ENCODE measurements at regions of chr1 and their contacts with region 1.

Region 1: DNA sequence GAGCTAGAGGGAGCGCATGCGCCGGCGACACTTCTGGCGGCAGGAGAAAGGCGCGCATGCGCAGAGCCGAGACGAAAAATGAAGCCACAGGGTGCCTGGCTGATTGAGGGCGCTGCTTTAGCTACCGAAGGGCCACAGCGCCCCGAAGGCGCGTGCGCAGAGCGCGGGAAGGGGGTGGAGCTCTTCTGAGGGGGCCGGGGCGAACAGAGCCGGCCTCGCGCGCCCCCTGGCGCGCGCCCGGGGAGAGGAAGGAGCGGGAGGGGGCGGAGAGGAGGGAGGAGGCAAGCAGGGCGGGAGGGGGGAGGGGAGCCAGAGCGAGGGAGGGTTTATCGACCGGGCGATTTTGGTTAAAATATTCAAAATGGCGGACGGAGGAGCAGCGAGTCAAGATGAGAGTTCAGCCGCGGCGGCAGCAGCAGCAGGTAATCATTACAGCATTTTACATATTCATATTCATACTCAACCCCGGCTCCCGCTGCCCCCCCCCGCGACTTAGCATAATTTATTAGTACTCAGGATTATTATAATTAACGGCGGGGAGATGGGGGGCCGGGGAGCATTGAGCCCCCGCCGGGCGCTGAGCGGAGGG is at the start of gene POU2F1:
- DNase-seq: peak; percentile 98 to 100 (median 99)
- H3K4me3 ChIP-seq: peak within 1 kb of the TSS; percentile 91 to 99 (median 91)
- H3K4me3 Mint-ChIP-seq: peak within 1 kb of the TSS; percentile 90 to 99
- H3K27ac ChIP-seq: peak within 1 kb of the TSS; percentile 86 to 97
- H3K27ac Mint-ChIP-seq: peak within 1 kb of the TSS; percentile 89 to 97 (median 92)
- H3K4me1 ChIP-seq: peaks cover 11 to 18% of the 10 kb centered on the region in 2 donors
- H3K4me1 Mint-ChIP-seq: peaks cover 35% of the 10 kb centered on the region
- H3K27me3 ChIP-seq: no peaks in the 10 kb centered on the region
- H3K27me3 Mint-ChIP-seq: no peaks in the 10 kb centered on the region
- CTCF ChIP-seq: peak; percentile 35
- polyA plus RNA-seq, gene POU2F1: 2.3 to 4.2 (median 3.9) TPM

Region 2: DNA sequence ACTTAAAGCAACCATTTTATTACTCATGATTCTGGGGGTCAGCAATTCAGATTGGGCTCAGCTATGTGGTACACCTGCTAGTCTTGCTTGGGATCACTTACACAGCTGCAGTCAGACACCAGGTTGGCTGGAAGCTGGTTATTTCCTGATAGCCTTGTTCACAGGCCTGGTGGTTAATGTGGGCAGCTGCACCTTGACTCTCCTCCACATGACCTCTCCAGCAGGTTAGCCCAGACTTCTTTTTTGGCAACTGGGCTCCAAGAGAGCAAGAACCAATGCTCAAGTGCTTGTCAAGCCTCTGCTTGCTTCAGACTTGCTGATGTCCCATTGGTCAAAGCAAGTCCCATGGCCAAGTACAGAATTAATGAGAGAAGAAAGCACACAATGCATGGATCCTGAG is 393.2 kb before region 1 on chr1:
- intact Hi-C with region 1: no loop called
- DNase-seq: no peak
- H3K4me3 ChIP-seq: no peak overlapping the region
- H3K4me3 Mint-ChIP-seq: no peak overlapping the region
- H3K27ac ChIP-seq: no peak overlapping the region
- H3K27ac Mint-ChIP-seq: no peak overlapping the region
- H3K4me1 ChIP-seq: no peaks in the 10 kb centered on the region
- H3K4me1 Mint-ChIP-seq: no peaks in the 10 kb centered on the region
- H3K27me3 ChIP-seq: peaks cover 0 to 2% of the 10 kb centered on the region in 2 donors
- H3K27me3 Mint-ChIP-seq: peaks cover 0 to 2% (median 0%) of the 10 kb centered on the region in 3 donors
- CTCF ChIP-seq: no peak

Region 3: GRCh38 chr1:166884040-166884642 is 336.5 kb before region 1 on chr1:
- intact Hi-C with region 1: loop called in 1 of 2 experiments (anchors 10 kb)
- DNase-seq: peak; percentile 27 to 49 (median 40)
- H3K4me3 ChIP-seq: peak overlapping the region in 1 of 3 experiments; percentile 13
- H3K4me3 Mint-ChIP-seq: peak overlapping the region; percentile 53 to 85
- H3K27ac ChIP-seq: no peak overlapping the region
- H3K27ac Mint-ChIP-seq: peak overlapping the region in 1 of 7 donors; percentile 41
- H3K4me1 ChIP-seq: peaks cover 7 to 11% of the 10 kb centered on the region in 2 donors
- H3K4me1 Mint-ChIP-seq: peaks cover 14% of the 10 kb centered on the region
- H3K27me3 ChIP-seq: peaks cover 0 to 13% of the 10 kb centered on the region in 2 donors
- H3K27me3 Mint-ChIP-seq: peaks cover 13 to 25% (median 15%) of the 10 kb centered on the region in 3 donors
- CTCF ChIP-seq: peak; percentile 90

Region 4: DNA sequence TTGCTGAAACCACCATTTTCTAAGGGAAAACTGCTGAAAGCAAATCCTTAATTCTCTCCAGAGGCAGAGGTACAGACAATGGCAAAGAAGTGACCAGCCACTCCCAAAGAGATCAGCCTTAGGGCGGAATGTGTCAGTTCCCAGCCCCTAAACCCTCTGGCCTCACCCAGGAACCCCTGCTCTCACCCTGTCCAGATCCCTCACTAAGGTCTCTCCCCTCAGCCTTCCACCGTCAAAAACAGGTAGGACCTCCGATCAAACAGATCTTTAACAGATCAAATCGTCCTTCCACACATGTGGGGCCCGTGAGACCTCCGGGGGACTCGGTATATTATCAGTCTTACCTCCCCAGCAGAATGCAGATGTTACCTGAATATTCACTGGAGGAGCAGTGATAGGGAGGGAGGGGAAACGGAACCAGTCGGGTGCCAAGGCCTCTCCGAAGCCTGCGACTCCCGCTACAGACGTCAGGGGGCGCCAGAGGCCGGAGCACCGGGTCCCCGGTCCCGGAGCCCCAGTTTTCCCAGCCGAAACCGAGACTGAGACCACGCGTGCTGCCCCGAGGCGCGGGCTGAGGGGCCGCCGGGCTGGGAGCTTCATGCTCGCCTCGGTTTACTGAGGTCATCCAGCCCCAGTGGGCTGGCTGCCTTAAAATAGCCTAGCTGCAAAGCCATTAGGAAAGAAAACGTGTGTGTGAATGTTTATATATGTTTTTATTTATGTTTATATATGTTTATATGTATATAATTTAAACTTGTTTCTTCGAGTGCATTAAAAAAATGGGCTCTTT is 154.1 kb before region 1 on chr1:
- intact Hi-C with region 1: loop called in 1 of 2 experiments (anchors 10 kb)
- DNase-seq: peak; percentile 52 to 71 (median 65)
- H3K4me3 ChIP-seq: peak overlapping the region in 1 of 3 experiments; percentile 12
- H3K4me3 Mint-ChIP-seq: peak overlapping the region; percentile 40 to 80
- H3K27ac ChIP-seq: no peak overlapping the region
- H3K27ac Mint-ChIP-seq: peak overlapping the region in 2 of 7 donors; percentile 5 to 38
- H3K4me1 ChIP-seq: peaks cover 3 to 7% of the 10 kb centered on the region in 2 donors
- H3K4me1 Mint-ChIP-seq: peaks cover 7% of the 10 kb centered on the region
- H3K27me3 ChIP-seq: no peaks in the 10 kb centered on the region
- H3K27me3 Mint-ChIP-seq: peaks cover 0 to 7% (median 3%) of the 10 kb centered on the region in 3 donors
- CTCF ChIP-seq: peak; percentile 98

Region 5: DNA sequence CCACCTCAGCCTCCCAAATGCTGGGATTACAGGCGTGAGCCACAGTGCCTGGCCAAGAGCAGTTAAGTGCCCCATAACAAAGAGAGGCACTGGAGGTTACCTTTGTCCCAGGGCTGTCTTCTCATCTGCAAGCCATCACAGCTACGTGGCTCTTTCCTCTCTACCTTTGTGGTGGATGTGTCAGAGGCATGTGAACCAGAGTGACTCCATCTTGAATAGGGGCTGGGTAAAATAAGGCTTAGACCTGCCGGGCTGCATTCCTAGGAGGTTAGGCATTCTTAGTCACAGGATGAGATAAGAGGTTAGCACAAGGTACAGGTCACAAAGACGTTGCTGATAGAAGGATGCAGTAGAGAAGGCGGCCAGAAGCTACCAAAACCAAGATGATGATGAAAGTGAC is 59.4 kb before region 1 on chr1:
- intact Hi-C with region 1: no loop called
- DNase-seq: no peak
- H3K4me3 ChIP-seq: no peak overlapping the region
- H3K4me3 Mint-ChIP-seq: no peak overlapping the region
- H3K27ac ChIP-seq: no peak overlapping the region
- H3K27ac Mint-ChIP-seq: no peak overlapping the region
- H3K4me1 ChIP-seq: peaks cover 3 to 6% of the 10 kb centered on the region in 2 donors
- H3K4me1 Mint-ChIP-seq: peaks cover 10% of the 10 kb centered on the region
- H3K27me3 ChIP-seq: no peaks in the 10 kb centered on the region
- H3K27me3 Mint-ChIP-seq: peaks cover 0 to 4% (median 0%) of the 10 kb centered on the region in 3 donors
- CTCF ChIP-seq: no peak

Region 6: DNA sequence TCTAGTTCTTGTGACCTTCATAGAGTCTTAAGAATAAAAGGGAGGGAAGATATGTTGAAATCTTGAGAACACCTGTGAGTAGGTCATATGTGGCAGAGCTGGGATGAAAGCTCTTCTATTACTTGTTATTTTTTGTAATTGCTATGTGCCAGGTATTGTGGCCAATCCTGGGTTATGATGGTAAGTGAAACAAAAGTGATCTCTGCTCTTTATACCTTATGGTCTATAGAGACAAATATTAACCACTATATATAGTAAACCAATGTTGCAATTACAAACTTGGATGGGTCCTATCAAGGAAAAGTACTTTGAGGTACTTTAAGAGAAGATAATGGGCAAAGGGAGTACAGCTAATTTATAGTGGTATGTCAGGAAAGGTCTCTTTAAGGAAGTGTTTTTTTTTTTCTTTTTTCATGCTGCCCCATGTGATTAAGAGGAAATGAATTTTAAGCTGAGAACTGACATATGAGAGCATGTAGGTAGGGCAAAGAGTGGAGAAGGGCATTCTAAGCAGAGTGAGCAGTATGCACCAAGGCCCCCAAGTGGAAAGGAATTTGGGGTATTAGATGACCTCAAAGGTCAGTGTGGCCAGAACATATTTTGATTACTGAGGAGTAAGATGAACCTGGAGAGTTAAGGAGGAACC is 43.3 kb after region 1 on chr1:
- intact Hi-C with region 1: loop called in 1 of 2 experiments (anchors 5 kb)
- DNase-seq: peak in 2 of 3 donors; percentile 12 to 25
- H3K4me3 ChIP-seq: no peak overlapping the region
- H3K4me3 Mint-ChIP-seq: no peak overlapping the region
- H3K27ac ChIP-seq: no peak overlapping the region
- H3K27ac Mint-ChIP-seq: no peak overlapping the region
- H3K4me1 ChIP-seq: peaks cover 14 to 21% of the 10 kb centered on the region in 2 donors
- H3K4me1 Mint-ChIP-seq: peaks cover 17% of the 10 kb centered on the region
- H3K27me3 ChIP-seq: no peaks in the 10 kb centered on the region
- H3K27me3 Mint-ChIP-seq: no peaks in the 10 kb centered on the region
- CTCF ChIP-seq: no peak

Region 7: DNA sequence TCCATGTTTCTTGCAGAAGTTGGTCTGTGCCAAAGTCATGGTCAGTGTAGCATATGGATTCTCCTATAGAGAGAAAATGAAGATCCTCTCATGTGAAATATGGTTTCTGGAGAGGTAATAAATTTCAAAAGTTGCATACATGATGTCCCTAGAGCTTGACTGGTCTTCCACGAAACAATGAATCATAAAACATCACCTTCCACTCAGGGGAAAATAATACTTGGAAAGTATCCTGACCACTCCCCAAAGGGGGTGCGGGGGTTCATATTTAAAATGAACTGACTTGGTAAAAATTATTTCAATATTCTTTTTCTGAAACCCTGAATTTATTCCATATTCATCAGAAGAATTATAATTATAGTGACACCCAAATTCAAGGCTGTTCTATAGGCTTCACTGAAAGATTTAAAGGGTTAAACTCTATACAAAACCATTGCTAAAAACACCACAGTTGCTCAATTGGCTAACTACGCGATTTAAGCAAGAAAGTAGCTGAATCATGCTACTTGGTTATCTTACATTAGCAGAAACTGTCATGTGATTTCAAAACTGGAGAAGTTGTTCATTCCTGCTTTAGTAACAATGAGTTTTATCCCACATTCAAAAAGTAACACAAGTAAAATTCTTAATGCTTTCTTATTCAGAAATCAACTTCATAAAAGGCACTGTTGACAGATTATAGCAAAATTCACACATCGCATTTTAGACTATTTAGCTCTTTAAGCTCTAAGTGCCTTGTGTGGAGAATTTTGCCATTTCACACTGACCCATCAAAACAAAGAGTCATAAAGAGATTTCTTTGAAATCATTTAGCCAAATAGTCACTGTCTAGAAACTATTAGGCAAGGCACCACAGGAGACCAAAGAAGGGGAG is 327.7 kb after region 1 on chr1:
- intact Hi-C with region 1: loop called (anchors 10 kb)
- DNase-seq: peak; percentile 73 to 95 (median 90)
- H3K4me3 ChIP-seq: peak overlapping the region; percentile 8 to 88 (median 37)
- H3K4me3 Mint-ChIP-seq: peak overlapping the region; percentile 66 to 84
- H3K27ac ChIP-seq: peak overlapping the region; percentile 90 to 91
- H3K27ac Mint-ChIP-seq: peak overlapping the region; percentile 90 to 100 (median 94)
- H3K4me1 ChIP-seq: peaks cover 73 to 80% of the 10 kb centered on the region in 2 donors
- H3K4me1 Mint-ChIP-seq: peaks cover 66% of the 10 kb centered on the region
- H3K27me3 ChIP-seq: no peaks in the 10 kb centered on the region
- H3K27me3 Mint-ChIP-seq: peaks cover 0 to 2% (median 0%) of the 10 kb centered on the region in 3 donors
- CTCF ChIP-seq: no peak

Region 8: DNA sequence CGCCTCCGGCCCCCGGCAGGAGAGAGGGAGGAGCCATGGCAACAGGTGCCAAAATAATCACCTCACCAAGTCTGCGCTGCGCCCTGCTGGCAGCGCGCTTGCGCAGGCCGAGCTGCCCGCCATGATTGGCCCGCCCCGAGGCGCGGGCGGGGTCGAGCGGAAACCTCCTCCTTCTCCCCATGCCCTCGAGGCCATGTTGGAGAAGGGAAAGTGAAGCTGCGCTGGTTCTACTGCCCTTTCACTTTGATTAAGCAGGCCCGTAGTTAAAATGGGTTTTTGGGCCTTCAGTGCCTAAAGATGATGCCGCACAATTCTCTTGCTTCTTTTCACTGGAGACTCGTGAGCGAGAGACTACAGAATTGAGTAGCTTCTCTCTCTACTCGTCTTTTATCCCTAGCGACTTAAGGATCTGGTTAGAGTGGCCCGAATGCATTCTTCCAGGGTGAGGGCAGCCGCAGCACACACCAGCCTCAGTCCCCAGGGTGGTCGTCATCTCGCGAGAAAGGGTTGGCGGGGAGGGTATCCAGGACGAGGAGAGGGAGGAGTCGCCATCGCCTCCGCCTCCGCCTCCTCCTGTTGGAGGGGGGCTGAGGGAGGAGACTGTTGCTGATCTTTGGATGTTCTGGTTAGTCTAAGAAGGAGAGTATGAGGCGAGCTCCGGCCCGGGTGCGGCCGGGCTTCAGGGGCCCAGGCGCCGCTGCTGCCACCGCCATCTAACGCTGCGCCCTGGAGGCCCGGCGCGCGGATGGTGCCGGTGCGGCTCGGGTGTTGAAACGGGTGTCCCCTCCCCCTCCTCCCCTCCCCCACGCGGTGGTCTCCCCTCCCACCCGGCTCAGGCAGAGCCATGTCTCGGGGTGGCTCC is 715.7 kb after region 1 on chr1 and contains the start of gene DCAF6:
- intact Hi-C with region 1: loop called in 1 of 2 experiments (anchors 10 kb)
- DNase-seq: peak; percentile 97 to 99 (median 98)
- H3K4me3 ChIP-seq: peak within 1 kb of the TSS; percentile 83 to 97 (median 90)
- H3K4me3 Mint-ChIP-seq: peak within 1 kb of the TSS; percentile 90 to 99
- H3K27ac ChIP-seq: peak within 1 kb of the TSS; percentile 90 to 97
- H3K27ac Mint-ChIP-seq: peak within 1 kb of the TSS; percentile 96 to 100 (median 100)
- H3K4me1 ChIP-seq: peaks cover 19 to 35% of the 10 kb centered on the region in 2 donors
- H3K4me1 Mint-ChIP-seq: peaks cover 34% of the 10 kb centered on the region
- H3K27me3 ChIP-seq: no peaks in the 10 kb centered on the region
- H3K27me3 Mint-ChIP-seq: peaks cover 0 to 5% (median 3%) of the 10 kb centered on the region in 3 donors
- CTCF ChIP-seq: no peak
- polyA plus RNA-seq, gene DCAF6: 11.8 to 16.1 (median 11.9) TPM